ENCODE measurements at regions of chr11 and their contacts with region 1.

Region 1: GRCh38 chr11:119474682-119475596 is 52.0 kb upstream of the THY1 start:
- DNase-seq: no peak
- H3K4me3 ChIP-seq: no peak overlapping the region
- H3K27ac ChIP-seq: peak overlapping the region; percentile 61
- H3K27me3 ChIP-seq: peaks cover 17% of the 10 kb centered on the region
- CTCF ChIP-seq: peak; percentile 97

Region 2: DNA sequence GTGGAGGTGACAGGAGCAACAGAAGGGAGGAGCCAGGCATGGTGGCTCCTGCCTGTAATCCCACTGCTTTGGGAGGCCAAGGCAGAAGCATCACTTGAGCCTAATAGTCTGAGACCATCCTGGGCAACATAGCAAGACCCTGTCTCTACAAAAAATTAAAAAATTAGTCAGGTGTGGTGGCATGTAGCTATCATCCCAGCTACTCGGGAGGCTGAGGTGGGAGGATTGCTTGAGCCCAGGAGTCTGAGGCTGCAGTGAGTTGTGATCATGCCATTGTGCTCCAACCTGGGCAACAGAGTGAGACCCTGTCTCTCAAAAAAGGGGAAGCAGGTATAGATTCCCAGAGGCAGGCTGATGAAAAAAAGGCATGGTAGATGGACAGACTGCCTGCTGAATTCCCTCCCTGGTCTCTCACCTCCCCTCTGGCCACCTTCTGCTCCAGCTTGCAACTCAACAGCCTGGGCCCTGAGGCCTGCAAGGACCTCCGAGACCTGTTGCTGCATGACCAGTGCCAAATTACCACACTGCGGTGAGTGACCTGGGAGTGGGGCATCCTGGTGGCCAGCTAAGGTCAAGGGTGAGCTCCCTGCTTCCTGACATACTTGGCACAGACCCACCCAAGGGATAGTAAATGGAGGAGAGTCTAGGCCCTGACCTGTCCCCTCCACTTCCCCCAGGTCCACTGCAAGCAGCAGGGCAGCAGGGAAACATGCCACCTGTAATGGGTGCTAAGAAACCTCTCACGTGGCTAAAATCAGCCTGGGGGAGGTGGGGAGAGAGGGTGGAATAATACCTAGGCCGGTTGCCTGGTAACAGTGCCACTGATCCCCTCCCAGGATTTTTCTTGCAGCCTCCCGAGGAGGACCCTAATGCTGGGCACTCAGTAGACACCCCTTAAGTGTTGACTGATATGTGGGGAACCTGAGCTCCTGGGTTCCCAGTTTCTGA is 293.9 kb before region 1 on chr11:
- CTCF ChIA-PET with region 1: no interaction called
- POLR2A ChIA-PET with region 1: interaction called, 10 read pairs
- DNase-seq: no peak
- H3K4me3 ChIP-seq: no peak overlapping the region
- H3K27ac ChIP-seq: no peak overlapping the region
- H3K27me3 ChIP-seq: peaks cover 6% of the 10 kb centered on the region
- CTCF ChIP-seq: no peak

Region 3: DNA sequence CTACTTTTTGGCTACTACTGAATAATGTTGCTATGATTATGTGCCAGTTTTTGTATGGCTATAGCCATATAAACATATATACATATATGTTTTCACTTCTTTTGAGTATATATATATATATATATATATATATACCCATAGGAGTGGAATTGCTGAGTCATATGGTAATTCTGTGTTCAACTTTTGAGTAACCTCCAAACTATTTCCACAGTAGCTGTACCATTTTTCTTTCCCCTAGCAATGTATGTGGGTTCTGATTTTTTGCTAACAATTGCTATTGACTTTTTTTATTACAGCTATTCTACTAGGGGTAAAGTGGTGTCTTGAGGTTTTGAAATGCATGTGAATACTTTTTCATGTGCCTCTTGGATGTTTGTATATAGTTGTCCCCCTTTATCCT is 238.4 kb before region 1 on chr11:
- CTCF ChIA-PET with region 1: no interaction called
- POLR2A ChIA-PET with region 1: no interaction called
- DNase-seq: peak; percentile 16
- H3K4me3 ChIP-seq: no peak overlapping the region
- H3K27ac ChIP-seq: no peak overlapping the region
- H3K27me3 ChIP-seq: no peaks in the 10 kb centered on the region
- CTCF ChIP-seq: no peak

Region 4: DNA sequence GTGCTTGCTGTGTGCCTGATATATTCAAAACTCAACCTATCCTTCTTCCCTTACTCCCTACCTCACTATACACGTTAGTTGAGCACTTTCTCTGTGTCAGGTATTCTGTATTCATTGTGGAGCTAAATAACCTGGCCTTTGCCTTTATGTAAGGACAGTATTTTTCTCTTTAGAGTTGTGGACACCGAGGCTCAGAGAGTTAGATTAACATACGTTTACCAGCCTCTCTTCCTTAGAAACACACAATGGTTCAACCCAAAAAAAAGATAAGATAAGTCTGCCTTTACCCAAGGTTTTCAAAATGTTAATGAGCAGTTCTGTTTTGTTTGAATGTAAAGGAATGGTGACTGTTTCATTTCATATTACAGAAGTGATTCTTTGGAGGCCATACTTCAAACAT is 223.8 kb before region 1 on chr11:
- CTCF ChIA-PET with region 1: no interaction called
- POLR2A ChIA-PET with region 1: no interaction called
- DNase-seq: no peak
- H3K4me3 ChIP-seq: no peak overlapping the region
- H3K27ac ChIP-seq: no peak overlapping the region
- H3K27me3 ChIP-seq: no peaks in the 10 kb centered on the region
- CTCF ChIP-seq: no peak

Region 5: DNA sequence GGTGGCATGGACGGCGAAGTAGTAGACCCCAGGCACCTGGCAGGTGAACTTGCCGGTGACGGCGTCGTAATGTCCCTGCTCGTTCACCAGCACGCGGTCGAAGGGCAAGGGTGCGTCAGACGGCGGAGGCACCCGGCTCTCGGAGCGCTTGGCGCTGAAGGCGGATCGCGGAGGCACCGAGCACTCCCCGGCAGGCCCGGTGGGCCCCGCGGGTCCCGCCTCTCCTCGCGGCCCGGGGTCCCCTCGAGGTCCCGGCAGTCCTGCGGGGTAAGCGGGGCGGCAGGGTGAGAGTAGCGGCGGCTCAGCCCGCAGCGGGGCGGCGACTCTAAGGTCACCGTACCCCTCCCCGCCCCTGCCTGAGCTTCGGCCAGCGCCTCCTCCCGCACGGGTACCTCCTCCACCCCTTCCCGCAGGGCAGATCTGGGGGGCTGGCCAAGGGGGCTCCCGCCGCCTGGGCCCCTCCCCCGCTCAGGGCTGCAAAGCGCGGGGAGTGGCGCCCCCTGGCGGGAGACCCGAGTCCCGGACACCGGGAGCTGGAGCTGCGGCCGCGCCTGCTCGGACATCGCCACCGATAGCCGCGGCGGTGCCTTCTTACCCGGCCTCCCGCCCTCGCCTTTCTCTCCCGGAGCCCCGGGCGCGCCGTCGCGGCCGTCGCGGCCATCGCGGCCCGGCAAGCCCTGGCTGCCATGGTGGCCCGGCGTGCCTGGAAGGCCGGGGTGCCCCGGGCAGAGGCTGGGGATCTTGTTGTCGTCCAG is 135.2 kb before region 1 on chr11:
- CTCF ChIA-PET with region 1: interaction called, 60 read pairs
- POLR2A ChIA-PET with region 1: interaction called, 11 read pairs
- DNase-seq: no peak
- H3K4me3 ChIP-seq: peak overlapping the region; percentile 64
- H3K27ac ChIP-seq: peak overlapping the region; percentile 39
- H3K27me3 ChIP-seq: peaks cover 15% of the 10 kb centered on the region
- CTCF ChIP-seq: peak; percentile 83

Region 6: GRCh38 chr11:119363851-119364590 is 110.9 kb before region 1 on chr11:
- CTCF ChIA-PET with region 1: interaction called, 21 read pairs
- POLR2A ChIA-PET with region 1: interaction called, 8 read pairs
- DNase-seq: no peak
- H3K4me3 ChIP-seq: peak overlapping the region; percentile 51; the same call in 1 of the 2 replicates
- H3K27ac ChIP-seq: no peak overlapping the region
- H3K27me3 ChIP-seq: peaks cover 15% of the 10 kb centered on the region
- CTCF ChIP-seq: no peak

Region 7: GRCh38 chr11:119381181-119381988 is 93.6 kb before region 1 on chr11 and contains the start of gene USP2:
- CTCF ChIA-PET with region 1: interaction called, 46 read pairs
- POLR2A ChIA-PET with region 1: interaction called, 4 read pairs
- DNase-seq: peak; percentile 88
- H3K4me3 ChIP-seq: peak within 1 kb of the TSS; percentile 68
- H3K27ac ChIP-seq: peak within 1 kb of the TSS; percentile 21
- H3K27me3 ChIP-seq: peaks cover 17% of the 10 kb centered on the region
- CTCF ChIP-seq: peak; percentile 78
- polyA plus RNA-seq, gene USP2: 0.32 and 0.46 TPM in 2 replicates

Region 8: DNA sequence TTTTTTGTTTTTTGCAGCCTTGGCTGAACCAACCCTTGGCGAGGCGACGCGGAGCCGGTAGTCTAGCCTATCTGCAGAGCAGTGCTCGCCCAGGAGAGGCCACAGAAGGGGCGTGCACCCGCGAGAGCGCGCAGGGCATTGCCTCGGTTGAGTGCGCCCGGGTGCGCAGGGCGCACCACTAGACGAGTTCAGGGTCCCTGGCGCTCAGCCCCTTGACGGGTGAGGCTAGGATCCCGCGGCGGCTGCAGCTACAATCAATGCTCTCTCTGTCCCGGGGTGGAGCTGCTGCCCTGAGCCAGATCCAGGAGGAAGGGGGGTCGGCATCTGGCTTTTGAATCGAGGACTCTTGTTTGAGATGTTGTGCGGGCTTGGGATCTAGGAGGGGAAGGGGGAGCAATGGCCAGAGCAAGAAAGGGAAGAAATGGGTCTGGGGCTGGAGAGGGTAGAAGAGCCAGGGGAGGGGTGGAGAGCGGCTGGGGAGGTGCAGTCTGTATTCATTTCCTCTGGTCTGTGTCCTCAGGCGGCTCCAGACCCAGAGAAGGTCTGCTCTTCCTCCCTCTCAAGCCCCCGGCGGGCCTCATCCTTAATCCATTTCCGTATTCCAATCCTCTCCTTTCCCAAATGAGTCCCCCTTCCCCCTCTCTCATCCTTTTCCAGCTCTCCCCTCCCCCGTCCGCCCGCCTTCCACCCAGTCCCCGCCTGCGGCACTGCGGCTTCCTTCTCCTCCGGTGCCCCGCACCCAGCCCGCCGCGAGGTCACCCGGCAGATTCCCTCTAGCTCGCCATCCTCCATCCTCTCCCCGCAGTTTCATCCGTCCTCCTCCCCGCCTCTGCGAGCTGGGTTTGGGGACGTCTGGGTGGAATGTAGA is 52.8 kb before region 1 on chr11:
- CTCF ChIA-PET with region 1: interaction called, 15 read pairs
- POLR2A ChIA-PET with region 1: interaction called, 18 read pairs
- DNase-seq: no peak
- H3K4me3 ChIP-seq: peak overlapping the region; percentile 89
- H3K27ac ChIP-seq: peak overlapping the region; percentile 47
- H3K27me3 ChIP-seq: no peaks in the 10 kb centered on the region
- CTCF ChIP-seq: no peak

Region 9: DNA sequence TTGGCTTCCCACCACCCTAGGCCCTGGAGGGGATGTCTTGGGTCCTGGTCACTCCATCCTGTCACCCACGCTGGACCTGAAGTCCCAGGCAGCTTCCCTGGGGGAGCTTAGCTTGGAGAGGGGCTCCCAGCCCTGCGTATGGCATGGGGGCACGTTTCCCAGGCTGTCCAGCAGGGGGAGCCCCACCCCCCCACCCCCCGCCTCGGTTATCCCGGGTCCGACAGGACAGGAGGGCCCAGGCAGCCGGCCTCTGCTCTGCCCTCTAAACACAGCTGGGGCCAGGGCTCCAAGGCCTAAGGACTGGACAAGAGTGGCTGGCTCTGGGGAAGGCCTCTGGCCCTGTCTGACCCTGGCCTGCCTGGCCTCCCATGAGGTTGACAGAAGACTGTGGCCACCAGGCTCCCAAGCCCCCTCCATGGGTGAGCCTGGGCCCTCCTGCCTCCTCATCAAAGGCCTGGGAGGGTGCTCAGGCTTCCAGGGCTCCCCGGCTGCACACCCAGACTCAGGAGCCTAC is 149.2 kb after region 1 on chr11:
- CTCF ChIA-PET with region 1: no interaction called
- POLR2A ChIA-PET with region 1: no interaction called
- DNase-seq: no peak
- H3K4me3 ChIP-seq: no peak overlapping the region
- H3K27ac ChIP-seq: no peak overlapping the region
- H3K27me3 ChIP-seq: peaks cover 46% of the 10 kb centered on the region
- CTCF ChIP-seq: peak; percentile 46

Region 10: GRCh38 chr11:120108154-120108865 is 633.4 kb after region 1 on chr11:
- CTCF ChIA-PET with region 1: interaction called, 18 read pairs
- POLR2A ChIA-PET with region 1: no interaction called
- DNase-seq: peak; percentile 8
- H3K4me3 ChIP-seq: no peak overlapping the region
- H3K27ac ChIP-seq: no peak overlapping the region
- H3K27me3 ChIP-seq: peaks cover 46% of the 10 kb centered on the region
- CTCF ChIP-seq: peak; percentile 99